Natural killer cell (primary cell): ENCODE measurements at regions of chr1 and their contacts with region 1.

Region 1: DNA sequence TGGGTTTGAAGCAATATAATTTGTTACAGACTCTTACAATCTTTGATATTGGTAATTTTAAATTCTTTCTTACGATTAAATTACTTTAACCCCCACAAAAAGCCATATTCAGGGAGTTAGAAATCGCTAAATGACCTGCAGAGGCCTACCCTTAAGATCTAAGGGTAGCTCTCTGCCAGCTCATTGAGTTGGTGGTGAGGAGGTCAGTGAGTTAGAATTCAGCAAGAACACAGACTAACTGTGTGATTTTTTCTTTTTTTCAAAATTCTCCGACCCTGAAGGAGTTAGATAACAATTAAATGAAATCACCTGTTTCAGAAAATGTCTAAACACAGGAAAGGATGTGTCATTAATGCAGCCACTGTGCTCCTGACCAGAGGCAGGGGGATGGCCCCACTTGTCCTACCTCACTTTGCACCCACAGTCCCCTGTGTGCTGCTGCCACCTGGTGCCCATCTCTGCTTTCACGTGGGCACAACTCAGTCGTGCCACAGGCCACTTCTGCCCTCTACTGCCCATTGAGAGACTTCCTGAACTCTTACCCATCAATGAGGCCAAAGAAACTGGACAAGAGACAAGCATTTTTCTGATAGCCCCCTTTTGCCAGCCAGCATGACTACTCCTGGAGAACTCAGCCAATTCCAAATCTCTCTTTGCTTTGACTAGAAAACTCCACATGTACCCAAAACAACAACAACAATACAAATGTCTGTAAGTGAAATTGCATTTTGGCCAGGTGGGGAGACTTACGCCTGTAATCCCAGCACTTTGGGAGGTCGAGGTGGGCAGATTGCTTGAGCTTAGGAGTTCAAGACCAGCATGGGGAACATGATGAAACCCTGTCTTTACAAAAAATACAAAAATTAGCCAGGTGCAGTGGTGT is 8.4 kb downstream of the CFAP45 start:
- DNase-seq: peak; percentile 76 to 90
- ATAC-seq: peak; percentile 96 to 99 (median 97)
- H3K4me3 ChIP-seq: no peak overlapping the region
- H3K4me3 Mint-ChIP-seq: no peak overlapping the region
- H3K27ac ChIP-seq: no peak overlapping the region
- H3K27ac Mint-ChIP-seq: peak overlapping the region; percentile 14 to 37
- H3K4me1 ChIP-seq: peaks cover 28% of the 10 kb centered on the region
- H3K4me1 Mint-ChIP-seq: peaks cover 21 to 30% of the 10 kb centered on the region in 2 donors
- H3K27me3 ChIP-seq: no peaks in the 10 kb centered on the region
- H3K27me3 Mint-ChIP-seq: peaks cover 0 to 5% of the 10 kb centered on the region in 2 donors
- CTCF ChIP-seq: peak; percentile 100

Region 2: GRCh38 chr1:159429074-159429861 is 462.2 kb before region 1 on chr1:
- intact Hi-C with region 1: loop called (anchors 10 kb)
- DNase-seq: no peak
- ATAC-seq: no peak
- H3K4me3 ChIP-seq: no peak overlapping the region
- H3K4me3 Mint-ChIP-seq: no peak overlapping the region
- H3K27ac ChIP-seq: no peak overlapping the region
- H3K27ac Mint-ChIP-seq: no peak overlapping the region
- H3K4me1 ChIP-seq: no peaks in the 10 kb centered on the region
- H3K4me1 Mint-ChIP-seq: no peaks in the 10 kb centered on the region
- H3K27me3 ChIP-seq: no peaks in the 10 kb centered on the region
- H3K27me3 Mint-ChIP-seq: peaks cover 12 to 22% of the 10 kb centered on the region in 2 donors
- CTCF ChIP-seq: no peak

Region 3: DNA sequence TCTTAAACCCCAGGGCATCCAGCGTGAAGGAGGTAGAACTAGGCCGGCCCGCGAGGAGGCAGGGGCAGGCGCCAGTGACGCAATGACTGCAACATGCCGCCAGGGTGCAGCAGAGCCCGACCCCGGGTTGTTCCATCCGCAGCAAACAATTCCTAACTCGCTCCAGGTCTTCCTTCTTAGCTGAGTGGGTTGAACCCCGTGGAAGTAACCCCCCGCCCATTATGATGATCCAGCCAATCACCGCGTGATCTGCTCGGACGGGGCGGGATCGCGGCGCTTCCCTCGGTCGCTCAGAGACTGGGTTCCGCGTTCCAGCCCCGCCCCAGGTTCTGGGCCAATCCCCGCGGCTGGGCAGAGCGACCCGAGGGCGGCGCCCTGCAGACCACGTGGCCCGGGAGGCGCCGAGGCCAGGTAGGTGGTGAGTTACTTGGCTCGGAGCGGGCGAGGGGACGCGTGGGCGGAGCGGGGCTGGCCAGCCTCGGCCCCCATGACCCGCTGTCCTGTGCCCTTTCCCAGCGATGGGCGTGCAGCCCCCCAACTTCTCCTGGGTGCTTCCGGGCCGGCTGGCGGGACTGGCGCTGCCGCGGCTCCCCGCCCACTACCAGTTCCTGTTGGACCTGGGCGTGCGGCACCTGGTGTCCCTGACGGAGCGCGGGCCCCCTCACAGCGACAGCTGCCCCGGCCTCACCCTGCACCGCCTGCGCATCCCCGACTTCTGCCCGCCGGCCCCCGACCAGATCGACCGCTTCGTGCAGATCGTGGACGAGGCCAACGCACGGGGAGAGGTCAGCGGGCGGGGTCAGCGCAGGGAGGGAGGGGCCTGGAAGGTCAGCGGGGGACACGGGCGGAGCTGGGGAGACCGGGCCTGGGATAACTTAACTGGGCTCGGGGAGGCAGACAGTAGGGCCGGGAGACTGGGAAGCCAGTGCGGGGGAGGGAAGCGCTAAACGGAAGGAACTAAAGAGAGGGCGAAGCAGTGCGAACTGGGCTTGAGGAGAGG is 110.6 kb before region 1 on chr1 and contains the start of gene DUSP23:
- intact Hi-C with region 1: loop called (anchors 1 kb)
- DNase-seq: peak; percentile 91 to 98
- ATAC-seq: peak; percentile 95 to 98 (median 96)
- H3K4me3 ChIP-seq: peak within 1 kb of the TSS; percentile 52
- H3K4me3 Mint-ChIP-seq: peak within 1 kb of the TSS; percentile 87
- H3K27ac ChIP-seq: peak within 1 kb of the TSS; percentile 9
- H3K27ac Mint-ChIP-seq: peak within 1 kb of the TSS; percentile 72 to 76
- H3K4me1 ChIP-seq: peaks cover 10% of the 10 kb centered on the region
- H3K4me1 Mint-ChIP-seq: peaks cover 17 to 38% of the 10 kb centered on the region in 2 donors
- H3K27me3 ChIP-seq: no peaks in the 10 kb centered on the region
- H3K27me3 Mint-ChIP-seq: peaks cover 0 to 6% of the 10 kb centered on the region in 2 donors
- CTCF ChIP-seq: peak; percentile 77
- total RNA-seq, gene DUSP23: 18.6 to 22.1 (median 21.1) TPM